ENCODE measurements at regions of chr2 and their contacts with region 1.

Region 1: DNA sequence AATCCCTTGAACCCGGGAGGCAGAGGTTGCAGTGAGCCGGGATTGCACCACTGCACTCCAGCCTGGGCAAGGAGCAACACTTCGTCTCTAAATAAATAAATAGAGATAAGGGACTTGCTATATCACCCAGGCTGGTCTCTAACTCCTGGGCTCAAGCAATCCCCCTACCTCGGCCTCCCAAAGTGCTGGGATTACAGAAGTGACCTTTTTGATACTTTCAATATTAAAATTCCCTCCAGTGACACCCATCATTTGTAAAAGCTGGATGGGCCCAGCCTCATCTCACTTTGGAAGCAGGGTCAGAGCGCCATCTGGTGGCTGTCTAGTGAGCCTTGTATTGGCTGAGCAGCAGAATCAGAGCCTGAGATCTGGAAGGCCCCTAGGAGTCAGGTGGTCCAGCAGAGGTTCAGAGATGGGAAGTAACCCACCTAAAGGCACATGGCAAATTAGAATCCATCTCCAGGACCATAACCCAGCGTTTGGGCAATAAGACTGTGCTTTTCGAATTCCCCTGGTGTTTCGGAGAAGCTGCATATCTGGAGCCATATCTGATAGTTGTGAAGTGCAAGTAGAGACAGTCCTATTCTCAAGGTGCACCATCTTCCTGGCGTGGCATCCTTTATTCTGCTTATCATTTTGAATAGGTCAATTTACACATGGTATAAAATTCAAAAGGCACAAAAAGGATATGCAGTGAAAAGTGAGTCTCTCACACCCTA is 18.3 kb upstream of the SLC35F6 start:
- DNase-seq: peak; percentile 90
- ATAC-seq: peak; percentile 96

Region 2: GRCh38 chr2:26542194-26542455 is 203.6 kb before region 1 on chr2:
- intact Hi-C with region 1: no loop called
- DNase-seq: no peak
- ATAC-seq: no peak

Region 3: DNA sequence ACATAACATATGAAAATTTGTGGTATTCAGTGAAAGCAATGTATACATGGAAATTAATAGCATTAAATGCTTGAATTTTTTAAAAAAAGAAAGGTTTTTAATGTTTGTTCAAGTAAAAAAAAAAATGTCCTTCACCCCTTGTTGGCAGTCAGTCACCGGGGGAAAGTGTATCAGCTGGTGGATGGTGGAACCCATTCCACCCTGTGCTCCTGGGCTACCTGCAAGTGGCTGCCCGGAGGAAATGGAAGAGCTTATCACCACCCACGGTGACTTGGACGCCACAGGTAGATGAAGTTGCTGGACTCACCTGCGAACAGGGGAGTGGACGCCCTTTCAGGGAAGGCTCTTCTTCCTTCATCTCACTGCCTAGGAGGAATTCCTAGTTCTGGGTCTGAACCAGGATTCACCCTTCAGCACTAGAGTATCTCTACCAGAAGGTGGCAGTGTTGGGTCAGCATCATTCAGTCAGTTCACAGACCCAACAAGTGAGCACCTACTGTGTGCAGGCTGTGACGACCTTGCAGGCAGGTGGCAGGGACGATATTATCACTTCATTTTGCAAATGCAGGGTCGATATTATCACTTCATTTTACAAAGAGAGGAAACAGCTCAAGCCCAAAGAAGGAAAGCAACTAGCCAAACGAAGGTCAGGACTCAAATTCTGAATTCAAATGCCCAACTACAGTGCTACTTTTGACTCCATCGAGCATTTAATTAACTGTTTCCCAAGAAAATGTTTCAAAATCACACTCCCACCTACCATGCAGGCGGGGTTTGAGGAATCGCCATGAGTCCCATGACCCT is 140.4 kb before region 1 on chr2:
- intact Hi-C with region 1: loop called (anchors 2 kb)
- DNase-seq: no peak
- ATAC-seq: peak; percentile 77

Measured in Right ventricle myocardium superior (tissue), 1 donor.